ENCODE measurements at regions of chr15 and their contacts with region 1.

Region 1: DNA sequence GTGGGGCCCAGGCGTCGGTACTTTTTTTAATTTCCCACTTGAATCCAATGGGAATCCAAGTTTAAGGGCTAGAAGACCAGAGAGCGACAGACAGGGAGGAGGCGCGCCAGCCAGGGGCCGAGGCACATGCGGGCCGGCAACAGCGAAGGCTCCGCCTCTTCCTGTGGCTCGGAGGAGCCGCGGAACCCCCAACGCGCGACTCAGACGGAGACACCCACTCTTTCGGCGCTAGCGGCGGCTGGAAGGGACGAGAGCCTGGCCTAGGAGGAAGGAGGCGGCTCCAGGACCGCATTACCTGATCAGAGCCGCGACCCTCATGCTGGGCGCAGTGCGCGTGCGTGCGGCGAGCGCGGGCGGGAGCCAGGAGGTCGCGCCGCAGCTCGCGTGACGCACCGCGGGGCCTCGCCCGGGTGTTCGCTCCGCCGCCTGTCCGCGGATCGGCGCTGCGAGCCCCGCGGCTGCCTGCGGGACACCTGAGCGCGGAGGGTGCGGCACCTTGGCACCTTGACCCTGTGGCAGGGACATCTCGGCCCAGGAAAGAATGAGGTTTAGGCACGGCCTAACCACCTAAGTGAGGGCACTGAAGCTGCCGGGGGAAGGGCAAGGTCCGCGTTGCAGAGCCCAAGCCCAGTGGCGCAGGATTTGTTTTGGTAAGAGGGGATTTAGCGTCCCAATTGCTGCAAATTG is at the start of gene DPH6:
- H3K4me3 Mint-ChIP-seq: peak within 1 kb of the TSS; percentile 94
- H3K27ac Mint-ChIP-seq: peak within 1 kb of the TSS; percentile 94
- H3K4me1 Mint-ChIP-seq: peaks cover 25% of the 10 kb centered on the region
- H3K27me3 Mint-ChIP-seq: no peaks in the 10 kb centered on the region

Region 2: GRCh38 chr15:34987985-34988873 is 557.7 kb before region 1 on chr15 and contains the start of gene ZNF770:
- intact Hi-C with region 1: loop called (anchors 5 kb)
- H3K4me3 Mint-ChIP-seq: peak within 1 kb of the TSS; percentile 93
- H3K27ac Mint-ChIP-seq: peak within 1 kb of the TSS; percentile 100
- H3K4me1 Mint-ChIP-seq: peaks cover 25% of the 10 kb centered on the region
- H3K27me3 Mint-ChIP-seq: peaks cover 5% of the 10 kb centered on the region

Region 3: GRCh38 chr15:35444557-35445204 is 101.3 kb before region 1 on chr15:
- intact Hi-C with region 1: no loop called
- H3K4me3 Mint-ChIP-seq: no peak overlapping the region
- H3K27ac Mint-ChIP-seq: no peak overlapping the region
- H3K4me1 Mint-ChIP-seq: no peaks in the 10 kb centered on the region
- H3K27me3 Mint-ChIP-seq: no peaks in the 10 kb centered on the region

Region 4: GRCh38 chr15:35595656-35596055 is 49.7 kb after region 1 on chr15:
- intact Hi-C with region 1: no loop called
- H3K4me3 Mint-ChIP-seq: no peak overlapping the region
- H3K27ac Mint-ChIP-seq: no peak overlapping the region
- H3K4me1 Mint-ChIP-seq: no peaks in the 10 kb centered on the region
- H3K27me3 Mint-ChIP-seq: no peaks in the 10 kb centered on the region

Measured in dendritic cell treated with granulocyte-macrophage colony-stimulating factor and Interleukin-4, amounts not matched to agents 40 ng/mL and 50 ng/mL, for 4 days (primary cell).